ENCODE measurements at regions of chr7 and their contacts with region 1.

Region 1: GRCh38 chr7:28096713-28097112 is 83.9 kb downstream of the JAZF1 start:
- DNase-seq: peak; percentile 47 to 67 (median 67)
- H3K4me3 ChIP-seq: no peak overlapping the region
- H3K4me3 Mint-ChIP-seq: no peak overlapping the region
- H3K27ac ChIP-seq: no peak overlapping the region
- H3K27ac Mint-ChIP-seq: no peak overlapping the region
- H3K4me1 ChIP-seq: peaks cover 15 to 28% of the 10 kb centered on the region in 2 donors
- H3K4me1 Mint-ChIP-seq: peaks cover 29% of the 10 kb centered on the region
- H3K27me3 ChIP-seq: no peaks in the 10 kb centered on the region
- H3K27me3 Mint-ChIP-seq: peaks cover 0 to 4% (median 1%) of the 10 kb centered on the region in 3 donors
- CTCF ChIP-seq: peak; percentile 89

Region 2: GRCh38 chr7:27947586-27948278 is 149.0 kb before region 1 on chr7:
- intact Hi-C with region 1: no loop called
- DNase-seq: no peak
- H3K4me3 ChIP-seq: no peak overlapping the region
- H3K4me3 Mint-ChIP-seq: no peak overlapping the region
- H3K27ac ChIP-seq: no peak overlapping the region
- H3K27ac Mint-ChIP-seq: no peak overlapping the region
- H3K4me1 ChIP-seq: no peaks in the 10 kb centered on the region
- H3K4me1 Mint-ChIP-seq: peaks cover under 1% of the 10 kb centered on the region
- H3K27me3 ChIP-seq: no peaks in the 10 kb centered on the region
- H3K27me3 Mint-ChIP-seq: peaks cover 0 to 4% (median 0%) of the 10 kb centered on the region in 3 donors
- CTCF ChIP-seq: no peak

Region 3: GRCh38 chr7:28020302-28020940 is 76.3 kb before region 1 on chr7:
- intact Hi-C with region 1: loop called (anchors 5 kb)
- DNase-seq: peak; percentile 42 to 61 (median 59)
- H3K4me3 ChIP-seq: no peak overlapping the region
- H3K4me3 Mint-ChIP-seq: peak overlapping the region in 1 of 2 donors; percentile 24
- H3K27ac ChIP-seq: no peak overlapping the region
- H3K27ac Mint-ChIP-seq: no peak overlapping the region
- H3K4me1 ChIP-seq: no peaks in the 10 kb centered on the region
- H3K4me1 Mint-ChIP-seq: peaks cover 21% of the 10 kb centered on the region
- H3K27me3 ChIP-seq: no peaks in the 10 kb centered on the region
- H3K27me3 Mint-ChIP-seq: no peaks in the 10 kb centered on the region
- CTCF ChIP-seq: peak; percentile 91

Region 4: GRCh38 chr7:28062197-28062991 is 34.3 kb before region 1 on chr7:
- intact Hi-C with region 1: loop called (anchors 5 kb)
- DNase-seq: peak; percentile 59 to 78 (median 60)
- H3K4me3 ChIP-seq: peak overlapping the region in 1 of 3 experiments; percentile 40
- H3K4me3 Mint-ChIP-seq: peak overlapping the region in 1 of 2 donors; percentile 68
- H3K27ac ChIP-seq: peak overlapping the region; percentile 72 to 83
- H3K27ac Mint-ChIP-seq: peak overlapping the region; percentile 63 to 95 (median 92)
- H3K4me1 ChIP-seq: peaks cover 23 to 39% of the 10 kb centered on the region in 2 donors
- H3K4me1 Mint-ChIP-seq: peaks cover 43% of the 10 kb centered on the region
- H3K27me3 ChIP-seq: no peaks in the 10 kb centered on the region
- H3K27me3 Mint-ChIP-seq: peaks cover 0 to 2% (median 0%) of the 10 kb centered on the region in 3 donors
- CTCF ChIP-seq: peak; percentile 84

Region 5: DNA sequence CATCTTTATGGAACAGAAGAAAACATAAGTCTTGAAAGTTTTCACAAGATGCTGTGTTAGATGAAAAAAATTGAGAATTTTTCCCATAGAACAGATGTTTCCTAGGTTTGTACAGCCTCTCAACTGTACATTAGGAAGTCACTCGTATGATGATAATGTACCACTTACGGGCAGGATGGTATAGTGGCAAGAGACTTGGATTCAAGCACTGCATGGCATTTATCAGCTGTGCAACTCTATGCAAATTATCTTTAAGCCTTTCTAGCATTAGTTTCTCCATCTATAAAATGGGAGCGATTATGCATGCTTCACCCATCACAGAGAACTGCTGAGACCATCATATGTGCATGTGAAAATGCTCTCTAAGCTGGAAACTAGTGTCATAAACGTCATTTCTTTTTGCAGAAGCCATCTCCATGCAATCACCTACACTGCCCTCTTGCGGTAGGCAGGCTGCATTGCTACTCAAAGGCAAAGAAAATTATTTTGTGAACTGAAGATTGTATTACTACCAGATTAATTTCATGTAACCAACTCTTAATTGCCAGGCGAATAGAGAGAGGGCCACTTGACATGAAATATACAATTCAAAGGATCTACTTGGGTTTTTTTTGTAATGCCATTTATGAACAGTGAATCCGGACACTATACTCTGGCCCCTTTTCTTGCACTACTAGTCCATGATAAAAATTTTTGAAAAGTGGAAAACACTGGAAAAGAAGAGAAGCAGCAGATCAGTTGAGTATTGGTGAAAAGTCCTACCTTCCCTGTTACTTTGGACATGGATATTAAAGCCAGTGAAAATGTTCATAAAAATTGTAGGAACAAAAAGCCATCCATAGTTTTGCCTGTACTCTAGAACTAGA is 18.4 kb before region 1 on chr7:
- intact Hi-C with region 1: loop called in 1 of 2 experiments (anchors 2 kb)
- DNase-seq: peak; percentile 46 to 63 (median 52)
- H3K4me3 ChIP-seq: no peak overlapping the region
- H3K4me3 Mint-ChIP-seq: no peak overlapping the region
- H3K27ac ChIP-seq: peak overlapping the region in 1 of 2 donors; percentile 47
- H3K27ac Mint-ChIP-seq: peak overlapping the region in 1 of 7 donors; percentile 9
- H3K4me1 ChIP-seq: peaks cover 50 to 55% of the 10 kb centered on the region in 2 donors
- H3K4me1 Mint-ChIP-seq: peaks cover 53% of the 10 kb centered on the region
- H3K27me3 ChIP-seq: no peaks in the 10 kb centered on the region
- H3K27me3 Mint-ChIP-seq: peaks cover 0 to 5% (median 0%) of the 10 kb centered on the region in 3 donors
- CTCF ChIP-seq: peak; percentile 95